Dorsolateral prefrontal cortex (tissue), 120 donors: ENCODE measurements at regions of chr1 and their contacts with region 1.

Region 1: DNA sequence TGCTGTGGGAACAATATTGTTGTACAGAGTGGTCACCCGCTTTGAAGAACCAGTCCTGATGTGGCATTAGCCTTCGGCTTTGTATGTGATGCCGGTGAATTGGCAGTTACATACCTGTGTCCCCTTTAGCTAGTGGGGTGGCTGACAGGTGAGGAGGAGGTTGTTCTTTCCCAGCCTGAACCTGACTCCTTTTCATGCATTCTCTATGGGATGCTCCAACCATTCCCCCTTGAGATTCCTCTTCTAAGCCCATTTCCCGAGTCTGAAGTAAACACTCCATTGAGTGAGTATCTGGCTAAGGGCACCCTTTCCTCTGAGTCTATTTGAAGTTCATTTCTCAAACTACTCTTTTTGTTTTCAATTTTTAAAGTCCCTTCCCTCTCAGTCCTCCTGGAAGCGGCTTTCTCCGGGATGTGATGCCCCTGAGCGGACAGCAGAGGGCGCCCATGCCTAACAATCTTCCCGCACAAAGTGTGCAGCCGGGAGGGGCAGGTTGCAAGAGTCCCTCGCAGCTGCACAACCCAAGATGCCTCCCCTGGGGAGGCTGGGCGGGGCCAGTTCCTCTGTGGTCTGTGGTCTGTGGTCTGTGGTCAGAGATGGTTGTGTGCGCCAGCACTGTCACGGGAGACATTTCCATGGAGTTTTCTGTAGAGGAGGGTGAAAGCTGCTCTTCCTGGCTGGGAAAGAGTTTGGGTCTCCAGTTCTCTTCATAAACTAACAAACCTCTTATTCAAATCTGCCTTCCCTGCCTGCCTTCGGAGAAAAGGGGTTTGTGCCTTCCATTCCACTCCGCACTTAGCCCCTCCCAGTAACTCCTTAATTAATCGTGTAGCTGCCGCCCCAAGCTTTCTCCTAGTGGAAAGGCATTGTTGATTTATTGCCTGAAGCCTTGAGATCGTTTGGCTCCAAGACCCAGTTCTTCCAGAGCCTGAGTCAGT is 36.4 kb upstream of the LMX1A start:
- DNase-seq: peak; percentile 62 to 87 (median 75)
- H3K4me3 ChIP-seq: peak overlapping the region in 42 of 59 donors; percentile 5 to 56 (median 31)
- H3K27ac ChIP-seq: no peak overlapping the region
- H3K27me3 ChIP-seq: peaks cover 0 to 21% (median 2%) of the 10 kb centered on the region in 45 donors
- CTCF ChIP-seq: peak; percentile 62 to 99 (median 96)

Region 2: GRCh38 chr1:165114022-165114888 is 278.6 kb before region 1 on chr1:
- intact Hi-C with region 1: no loop called
- DNase-seq: peak in 4 of 10 donors; percentile 18 to 72 (median 42)
- H3K4me3 ChIP-seq: no peak overlapping the region
- H3K27ac ChIP-seq: no peak overlapping the region
- H3K27me3 ChIP-seq: peaks cover 0 to 51% (median 21%) of the 10 kb centered on the region in 45 donors
- CTCF ChIP-seq: peak; percentile 59 to 97 (median 79)

Region 3: DNA sequence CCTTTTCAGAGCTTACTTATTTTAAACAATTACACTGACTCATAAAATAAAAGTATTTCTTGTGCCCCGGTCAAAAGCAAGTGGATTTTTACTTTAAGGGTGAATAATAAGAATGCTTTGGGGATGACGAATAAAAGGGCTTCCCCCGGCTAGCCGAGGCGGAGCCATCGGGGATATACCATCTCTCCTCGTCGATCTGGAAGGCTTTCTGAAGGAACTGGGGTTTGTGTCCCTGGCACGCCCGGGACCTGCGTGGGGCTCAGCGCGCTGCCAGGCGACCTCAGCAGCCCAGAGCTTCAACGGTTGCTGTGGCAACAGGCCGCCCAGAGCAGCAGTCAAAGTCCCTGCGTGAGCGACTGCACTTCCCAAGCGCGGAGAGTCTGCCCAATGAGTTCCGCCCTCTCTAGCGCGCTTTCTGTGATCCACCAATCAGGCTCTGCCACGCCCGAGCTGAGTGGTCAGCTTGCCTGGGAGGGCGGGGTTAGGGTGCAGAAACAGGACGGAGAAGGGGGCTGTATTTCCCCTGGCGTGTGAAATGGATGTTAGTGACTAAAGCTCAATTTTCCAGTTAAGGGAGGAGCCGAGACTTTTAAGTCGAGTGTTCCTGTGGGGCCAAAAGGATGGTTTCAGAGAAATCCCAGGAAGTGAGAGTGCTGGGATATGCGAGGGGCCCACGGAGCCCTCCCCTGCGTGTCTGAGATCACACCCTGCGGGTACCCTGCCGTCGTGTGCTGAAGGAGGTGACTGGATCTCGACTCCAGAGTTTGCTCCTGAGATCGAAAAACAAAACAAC is 205.2 kb after region 1 on chr1:
- intact Hi-C with region 1: loop called (anchors 1 kb)
- DNase-seq: peak; percentile 89 to 99 (median 96)
- H3K4me3 ChIP-seq: peak overlapping the region; percentile 41 to 96 (median 70)
- H3K27ac ChIP-seq: peak overlapping the region in 33 of 59 donors; percentile 4 to 84 (median 55)
- H3K27me3 ChIP-seq: peaks cover 0 to 18% (median 3%) of the 10 kb centered on the region in 45 donors
- CTCF ChIP-seq: peak in 20 of 56 donors; percentile 5 to 52 (median 28)